CD4-positive, alpha-beta memory T cell (primary cell): ENCODE measurements at regions of chr11 and their contacts with region 1.

Region 1: DNA sequence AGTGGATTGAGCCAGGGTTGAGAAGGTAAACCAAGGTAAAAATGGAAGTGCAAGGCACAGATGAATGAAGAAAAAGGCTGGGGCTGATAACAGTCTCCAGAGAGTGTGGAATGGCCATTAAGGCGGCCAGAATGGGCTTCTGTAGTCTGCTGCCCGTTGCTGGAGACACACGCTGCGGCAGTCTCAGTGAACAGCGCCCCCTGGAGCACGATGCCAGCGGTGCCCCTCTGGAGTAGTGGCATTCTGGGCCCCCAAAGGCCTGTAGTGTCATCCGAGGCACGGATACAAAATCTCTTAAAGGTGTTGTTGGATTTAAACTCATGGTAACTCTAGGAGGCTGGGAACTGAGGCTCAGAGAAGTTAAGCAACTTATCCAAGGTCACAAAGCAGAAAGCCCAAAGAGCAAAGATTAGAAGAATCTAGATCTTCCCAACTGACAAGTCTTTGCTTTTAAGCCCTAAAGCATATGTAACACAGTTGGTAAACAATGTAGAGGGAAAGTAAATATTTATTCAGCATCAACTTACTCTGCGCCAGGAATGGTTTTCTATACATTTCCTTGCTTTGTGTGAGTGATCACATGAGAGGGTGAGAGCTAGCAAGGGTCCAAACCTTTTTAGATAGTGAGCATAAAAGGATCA is 18.2 kb downstream of the KCNJ1 start:
- DNase-seq: peak in 4 of 5 donors; percentile 46 to 62 (median 56)
- H3K4me3 ChIP-seq: no peak overlapping the region
- H3K4me3 Mint-ChIP-seq: peak overlapping the region in 1 of 8 donors; percentile 27
- H3K27ac ChIP-seq: no peak overlapping the region
- H3K27ac Mint-ChIP-seq: peak overlapping the region in 5 of 7 donors; percentile 3 to 78 (median 46)
- H3K4me1 ChIP-seq: peaks cover 35% of the 10 kb centered on the region
- H3K4me1 Mint-ChIP-seq: peaks cover 23 to 42% (median 37%) of the 10 kb centered on the region in 4 donors
- H3K27me3 ChIP-seq: no peaks in the 10 kb centered on the region
- H3K27me3 Mint-ChIP-seq: no peaks in the 10 kb centered on the region

Region 2: DNA sequence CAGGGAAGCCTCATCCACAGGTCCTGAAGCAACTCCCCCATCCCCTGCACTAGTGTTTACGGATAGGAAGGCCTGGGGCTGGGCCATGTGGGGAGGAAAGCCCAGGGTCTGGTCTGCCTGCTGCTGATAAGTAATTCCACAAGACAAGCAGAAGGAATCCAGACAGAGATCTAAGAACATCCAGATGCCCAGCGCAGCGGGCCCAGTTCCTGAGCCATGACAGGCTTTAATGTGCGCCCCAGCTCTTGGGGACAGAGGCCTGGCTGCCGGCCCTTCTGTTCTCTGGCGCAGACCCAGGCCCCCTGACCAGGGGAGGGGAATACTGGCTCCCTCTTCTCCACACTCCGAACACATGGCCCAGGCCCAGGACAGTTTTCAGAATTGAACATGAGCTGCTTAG is 232.8 kb before region 1 on chr11:
- CTCF ChIA-PET with region 1: no interaction called
- POLR2A ChIA-PET with region 1: no interaction called
- intact Hi-C with region 1: no loop called
- DNase-seq: no peak
- H3K4me3 ChIP-seq: no peak overlapping the region
- H3K4me3 Mint-ChIP-seq: no peak overlapping the region
- H3K27ac ChIP-seq: no peak overlapping the region
- H3K27ac Mint-ChIP-seq: peak overlapping the region in 3 of 7 donors; percentile 1 to 29 (median 28)
- H3K4me1 ChIP-seq: peaks cover 24% of the 10 kb centered on the region
- H3K4me1 Mint-ChIP-seq: peaks cover 25 to 44% (median 34%) of the 10 kb centered on the region in 4 donors
- H3K27me3 ChIP-seq: no peaks in the 10 kb centered on the region
- H3K27me3 Mint-ChIP-seq: no peaks in the 10 kb centered on the region

Region 3: GRCh38 chr11:128859563-128860441 is 10.9 kb after region 1 on chr11:
- CTCF ChIA-PET with region 1: interaction called, 24 read pairs
- POLR2A ChIA-PET with region 1: interaction called, 7 read pairs
- intact Hi-C with region 1: no loop called
- DNase-seq: peak; percentile 66 to 76 (median 73)
- H3K4me3 ChIP-seq: no peak overlapping the region
- H3K4me3 Mint-ChIP-seq: peak overlapping the region in 2 of 8 donors; percentile 14 to 32
- H3K27ac ChIP-seq: no peak overlapping the region
- H3K27ac Mint-ChIP-seq: peak overlapping the region in 2 of 7 donors; percentile 14 to 71
- H3K4me1 ChIP-seq: no peaks in the 10 kb centered on the region
- H3K4me1 Mint-ChIP-seq: peaks cover 4 to 11% (median 7%) of the 10 kb centered on the region in 4 donors
- H3K27me3 ChIP-seq: no peaks in the 10 kb centered on the region
- H3K27me3 Mint-ChIP-seq: peaks cover 0 to 2% of the 10 kb centered on the region in 2 donors